Ascending aorta (tissue), 2 donors: ENCODE measurements at regions of chr6 and their contacts with region 1.

Region 1: DNA sequence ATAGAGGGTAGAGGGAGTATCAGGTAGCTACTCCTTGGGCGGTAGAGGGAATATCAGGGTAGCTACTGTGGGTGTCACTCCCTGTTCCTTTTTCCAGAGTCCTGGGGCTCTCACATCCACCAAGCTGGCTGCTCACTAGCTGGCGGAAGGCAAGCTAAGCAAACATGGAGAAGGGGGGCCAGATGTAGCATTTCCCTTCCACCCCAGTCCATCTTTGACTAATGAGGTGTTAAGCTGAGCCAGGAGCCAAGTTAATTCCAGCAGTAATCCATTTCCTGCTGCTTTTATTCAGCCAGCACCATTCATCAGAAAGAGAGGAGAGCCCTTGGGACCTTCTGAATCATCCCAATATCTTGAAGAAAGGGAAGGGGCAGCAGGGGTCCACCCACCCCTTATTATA is 330.0 kb downstream of the ZFAND3 start:
- DNase-seq: no peak
- H3K4me3 ChIP-seq: no peak overlapping the region
- H3K27ac ChIP-seq: no peak overlapping the region
- H3K4me1 ChIP-seq: no peaks in the 10 kb centered on the region
- H3K27me3 ChIP-seq: no peaks in the 10 kb centered on the region
- CTCF ChIP-seq: no peak

Region 2: GRCh38 chr6:37913210-37913609 is 236.3 kb before region 1 on chr6:
- intact Hi-C with region 1: loop called (anchors 5 kb)
- DNase-seq: no peak
- H3K4me3 ChIP-seq: no peak overlapping the region
- H3K27ac ChIP-seq: no peak overlapping the region
- H3K4me1 ChIP-seq: peaks cover 0 to 3% of the 10 kb centered on the region in 2 donors
- H3K27me3 ChIP-seq: no peaks in the 10 kb centered on the region
- CTCF ChIP-seq: no peak